Activated naive CD4-positive, alpha-beta T cell treated with anti-CD3 and anti-CD28 coated beads for 36 hours (primary cell): ENCODE measurements at regions of chr10 and their contacts with region 1.

Region 1: DNA sequence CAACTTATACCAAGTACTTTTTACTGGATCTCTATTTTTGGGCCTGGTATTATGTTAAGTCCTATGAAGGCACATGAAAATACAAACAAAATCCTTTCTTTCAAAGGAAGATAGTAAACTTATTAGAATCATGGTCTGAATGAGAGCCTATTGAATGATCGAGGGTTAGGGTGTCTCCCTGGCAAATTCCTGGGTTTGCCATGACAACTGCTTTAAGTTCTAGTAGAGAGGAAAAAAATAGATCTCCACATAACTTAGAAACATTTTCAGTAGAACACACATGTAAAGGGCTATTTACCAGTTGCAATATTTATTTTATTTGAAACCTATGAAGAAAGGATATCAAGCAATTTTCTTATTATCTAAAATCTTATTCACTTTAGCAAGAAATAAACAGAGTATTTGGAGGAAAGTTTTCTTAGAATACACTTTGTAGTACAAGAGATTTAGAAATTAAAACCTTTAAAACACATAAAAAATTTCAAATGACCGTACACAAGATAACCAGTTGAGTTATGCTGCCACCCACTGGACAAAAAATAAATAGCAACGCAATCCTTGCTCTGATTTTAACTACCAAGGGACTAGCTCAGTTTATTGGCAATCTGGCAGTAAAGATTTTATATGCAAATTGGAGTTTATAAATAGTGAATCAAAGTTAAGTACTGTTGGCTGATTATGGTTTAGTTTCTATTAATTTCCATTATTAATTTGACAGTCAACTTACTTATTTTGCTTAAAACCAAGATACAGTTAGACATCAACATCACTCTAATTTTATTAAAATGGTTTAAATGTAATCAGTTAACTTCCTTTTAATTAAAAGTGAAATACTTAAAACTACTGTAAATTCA is 33.9 kb downstream of the CACUL1 start:
- DNase-seq: peak; percentile 82
- H3K4me3 Mint-ChIP-seq: no peak overlapping the region
- H3K27ac Mint-ChIP-seq: no peak overlapping the region
- H3K4me1 Mint-ChIP-seq: peaks cover 10% of the 10 kb centered on the region
- H3K27me3 Mint-ChIP-seq: no peaks in the 10 kb centered on the region

Region 2: GRCh38 chr10:118272149-118272721 is 448.7 kb before region 1 on chr10:
- CTCF ChIA-PET with region 1: no interaction called
- intact Hi-C with region 1: no loop called
- DNase-seq: no peak
- H3K4me3 Mint-ChIP-seq: no peak overlapping the region
- H3K27ac Mint-ChIP-seq: no peak overlapping the region
- H3K4me1 Mint-ChIP-seq: no peaks in the 10 kb centered on the region
- H3K27me3 Mint-ChIP-seq: peaks cover 21% of the 10 kb centered on the region

Region 3: DNA sequence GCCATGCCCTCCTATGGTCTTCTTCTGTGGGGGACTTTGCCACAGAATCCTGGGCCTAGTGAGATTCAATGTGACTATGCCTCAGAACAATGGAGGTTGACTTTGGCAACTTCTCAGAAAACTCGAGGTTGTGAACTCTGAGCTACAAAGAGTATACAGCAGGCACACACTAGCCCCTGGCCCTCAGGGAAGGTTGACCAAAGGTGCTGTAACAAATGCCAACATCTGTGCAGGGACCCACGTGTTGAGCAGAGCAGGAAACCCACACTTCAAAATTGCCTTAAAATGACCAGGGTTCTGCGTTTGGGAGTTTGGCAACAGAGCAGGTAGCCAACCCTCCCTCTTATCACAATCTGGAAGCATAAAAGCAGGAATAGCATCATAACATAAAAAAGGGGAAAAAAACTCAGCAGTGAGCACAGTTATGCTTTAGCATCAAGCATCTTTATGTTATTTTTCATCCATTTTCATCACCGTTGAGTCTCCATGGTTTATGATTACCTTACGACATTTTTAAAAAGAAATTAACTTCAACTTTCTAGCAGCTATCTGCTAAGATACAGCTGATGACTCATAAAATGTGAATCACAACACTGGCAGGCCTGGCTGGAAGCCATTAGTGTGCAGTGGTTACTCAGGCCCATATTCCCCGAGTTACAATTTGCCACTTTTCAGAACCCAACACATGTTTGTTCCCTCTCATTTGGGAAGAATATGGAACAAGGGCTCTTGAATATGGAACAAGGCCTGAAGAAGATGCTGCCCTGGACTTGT is 136.5 kb before region 1 on chr10:
- CTCF ChIA-PET with region 1: interaction called, 10 read pairs
- intact Hi-C with region 1: no loop called
- DNase-seq: no peak
- H3K4me3 Mint-ChIP-seq: no peak overlapping the region
- H3K27ac Mint-ChIP-seq: no peak overlapping the region
- H3K4me1 Mint-ChIP-seq: no peaks in the 10 kb centered on the region
- H3K27me3 Mint-ChIP-seq: no peaks in the 10 kb centered on the region

Region 4: GRCh38 chr10:118594392-118595063 is 126.4 kb before region 1 on chr10:
- CTCF ChIA-PET with region 1: interaction called, 6 read pairs
- intact Hi-C with region 1: loop called (anchors 1 kb)
- DNase-seq: peak; percentile 51
- H3K4me3 Mint-ChIP-seq: no peak overlapping the region
- H3K27ac Mint-ChIP-seq: no peak overlapping the region
- H3K4me1 Mint-ChIP-seq: peaks cover 23% of the 10 kb centered on the region
- H3K27me3 Mint-ChIP-seq: peaks cover 40% of the 10 kb centered on the region

Region 5: GRCh38 chr10:118635674-118636402 is 85.1 kb before region 1 on chr10:
- CTCF ChIA-PET with region 1: no interaction called
- intact Hi-C with region 1: no loop called
- DNase-seq: no peak
- H3K4me3 Mint-ChIP-seq: no peak overlapping the region
- H3K27ac Mint-ChIP-seq: no peak overlapping the region
- H3K4me1 Mint-ChIP-seq: no peaks in the 10 kb centered on the region
- H3K27me3 Mint-ChIP-seq: no peaks in the 10 kb centered on the region

Region 6: DNA sequence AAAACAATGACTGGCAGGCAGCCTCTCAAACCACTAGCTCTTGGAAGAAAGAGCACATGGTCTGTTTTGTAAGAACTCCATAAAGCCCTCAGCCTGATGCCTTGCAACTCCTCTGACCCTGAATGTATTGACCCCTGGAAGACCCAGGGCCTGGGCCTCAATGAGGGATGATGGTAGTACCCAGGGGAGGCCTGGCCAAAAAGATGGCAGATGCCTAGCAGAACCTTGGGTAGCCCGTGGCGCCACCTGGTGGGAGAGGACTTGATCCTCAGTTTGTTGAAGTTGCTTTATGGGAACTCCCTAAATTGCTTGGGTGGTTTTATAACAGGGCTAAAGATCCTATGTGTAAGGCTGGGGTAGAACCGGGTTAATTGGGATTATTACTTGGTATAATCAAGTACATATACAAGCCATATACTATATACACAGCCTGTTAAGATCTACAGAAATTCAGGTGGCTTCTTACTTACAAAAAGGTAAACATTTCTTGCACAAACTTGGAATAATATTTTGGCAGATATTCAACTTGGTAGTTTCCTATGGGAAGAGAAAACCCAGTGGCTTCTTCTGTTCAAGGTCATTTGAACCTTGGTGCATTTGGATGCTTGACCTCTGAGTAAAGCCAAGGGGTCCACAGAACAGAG is 129.6 kb after region 1 on chr10:
- CTCF ChIA-PET with region 1: no interaction called
- intact Hi-C with region 1: loop called (anchors 1 kb)
- DNase-seq: peak; percentile 93
- H3K4me3 Mint-ChIP-seq: no peak overlapping the region
- H3K27ac Mint-ChIP-seq: no peak overlapping the region
- H3K4me1 Mint-ChIP-seq: no peaks in the 10 kb centered on the region
- H3K27me3 Mint-ChIP-seq: peaks cover 2% of the 10 kb centered on the region